Naive thymus-derived CD8-positive, alpha-beta T cell (primary cell): ENCODE measurements at regions of chr5 and their contacts with region 1.

Region 1: DNA sequence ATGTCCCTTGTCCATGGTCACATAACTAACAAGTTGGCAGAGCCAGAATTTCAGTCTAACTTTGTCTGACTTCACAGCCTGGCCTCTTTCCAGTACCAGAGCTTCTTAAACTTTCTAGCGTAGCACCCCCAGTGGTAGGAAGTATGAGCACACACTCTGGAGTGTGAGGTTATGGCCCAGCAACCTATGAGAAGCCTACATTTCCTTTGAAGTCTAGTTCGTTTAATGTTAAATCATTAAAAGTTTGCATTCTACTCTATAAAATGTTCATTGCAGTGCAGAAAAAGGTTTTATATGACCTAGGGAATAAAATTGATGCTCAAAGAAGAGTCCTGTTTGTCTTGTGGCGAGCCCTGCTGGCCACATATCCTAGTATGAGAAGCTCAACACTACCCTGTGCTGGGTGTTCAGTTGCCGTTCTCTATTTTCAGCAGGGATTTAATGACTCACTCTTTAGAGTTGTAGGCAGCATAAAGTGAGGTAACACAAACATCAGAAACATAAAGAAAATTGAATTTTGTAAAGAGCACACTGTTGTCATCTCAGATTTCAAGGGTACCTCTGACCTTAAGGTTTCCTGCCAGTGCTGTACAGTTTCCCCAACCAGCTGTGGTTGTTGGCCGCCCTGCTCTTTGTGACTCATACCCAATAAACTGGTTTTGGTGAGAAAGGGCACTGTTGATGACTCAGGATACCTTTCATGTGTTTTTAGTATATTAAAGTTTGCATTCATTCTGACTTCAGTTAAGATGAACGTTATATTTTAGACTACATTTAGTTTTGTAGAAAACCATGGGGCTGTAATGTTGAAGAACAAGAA is 14.3 kb downstream of the MCCC2 start:
- DNase-seq: peak; percentile 8 to 81 (median 57)
- ATAC-seq: peak; percentile 92 to 96
- H3K4me3 Mint-ChIP-seq: peak overlapping the region in 5 of 10 donors; percentile 32 to 68 (median 63)
- H3K27ac Mint-ChIP-seq: peak overlapping the region; percentile 51 to 97 (median 84)
- H3K4me1 Mint-ChIP-seq: peaks cover 7 to 37% (median 20%) of the 10 kb centered on the region in 4 donors
- H3K27me3 Mint-ChIP-seq: no peaks in the 10 kb centered on the region

Region 2: GRCh38 chr5:71586941-71587765 is 14.3 kb before region 1 on chr5 and contains the start of gene MCCC2:
- POLR2A ChIA-PET with region 1: interaction called, 25 read pairs
- DNase-seq: peak; percentile 89 to 98 (median 95)
- ATAC-seq: peak; percentile 97 to 98
- H3K4me3 Mint-ChIP-seq: peak within 1 kb of the TSS; percentile 90 to 100 (median 98)
- H3K27ac Mint-ChIP-seq: peak within 1 kb of the TSS; percentile 94 to 100 (median 98)
- H3K4me1 Mint-ChIP-seq: peaks cover 15 to 51% (median 42%) of the 10 kb centered on the region in 4 donors
- H3K27me3 Mint-ChIP-seq: no peaks in the 10 kb centered on the region
- polyA plus RNA-seq, gene MCCC2: 22.4 to 28.9 (median 25.5) TPM

Region 3: DNA sequence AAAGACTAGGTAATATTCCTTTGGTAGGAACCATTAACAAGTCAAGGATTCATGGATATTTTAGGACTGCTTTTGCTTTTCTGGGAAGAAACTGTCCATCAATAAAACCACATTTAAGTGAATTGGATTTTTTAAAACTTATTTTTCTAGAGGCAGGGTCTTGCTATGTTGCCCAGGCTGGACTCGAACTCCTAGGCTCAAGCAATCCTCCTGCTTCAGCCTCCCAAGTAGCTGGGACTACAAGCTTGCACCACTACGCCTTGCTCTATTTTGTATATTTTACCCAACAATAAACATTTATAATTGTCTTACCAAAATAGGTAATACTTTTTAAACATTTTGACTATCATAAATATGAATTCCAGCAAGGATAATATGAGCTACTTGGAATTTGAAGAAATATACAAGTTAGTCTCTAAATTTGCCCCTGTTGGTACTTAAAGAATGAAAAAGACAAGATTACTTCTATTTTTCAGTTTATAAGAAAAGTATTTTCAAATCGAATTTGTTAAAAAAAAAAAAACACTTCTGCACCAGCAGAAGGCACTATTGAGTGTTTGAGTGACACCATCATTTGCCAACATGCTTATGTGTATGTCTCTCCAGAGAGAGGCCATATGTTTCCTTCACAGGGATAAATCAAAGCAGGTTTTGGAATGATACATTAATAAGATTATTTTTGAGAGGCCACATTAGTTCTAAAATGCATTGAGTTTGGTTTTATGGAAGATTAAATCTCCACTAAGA is 57.7 kb after region 1 on chr5:
- POLR2A ChIA-PET with region 1: no interaction called
- DNase-seq: no peak
- ATAC-seq: no peak
- H3K4me3 Mint-ChIP-seq: no peak overlapping the region
- H3K27ac Mint-ChIP-seq: no peak overlapping the region
- H3K4me1 Mint-ChIP-seq: no peaks in the 10 kb centered on the region
- H3K27me3 Mint-ChIP-seq: no peaks in the 10 kb centered on the region

Region 4: GRCh38 chr5:71681296-71681695 is 79.9 kb after region 1 on chr5:
- POLR2A ChIA-PET with region 1: no interaction called
- DNase-seq: no peak
- ATAC-seq: no peak
- H3K4me3 Mint-ChIP-seq: no peak overlapping the region
- H3K27ac Mint-ChIP-seq: no peak overlapping the region
- H3K4me1 Mint-ChIP-seq: no peaks in the 10 kb centered on the region
- H3K27me3 Mint-ChIP-seq: peaks cover 27 to 68% (median 48%) of the 10 kb centered on the region in 5 donors

Region 5: GRCh38 chr5:71693828-71694427 is 92.5 kb after region 1 on chr5:
- POLR2A ChIA-PET with region 1: no interaction called
- DNase-seq: no peak
- ATAC-seq: no peak
- H3K4me3 Mint-ChIP-seq: no peak overlapping the region
- H3K27ac Mint-ChIP-seq: no peak overlapping the region
- H3K4me1 Mint-ChIP-seq: peaks cover 3 to 16% (median 6%) of the 10 kb centered on the region in 4 donors
- H3K27me3 Mint-ChIP-seq: peaks cover 0 to 12% (median 3%) of the 10 kb centered on the region in 5 donors